ENCODE measurements at regions of chr16 and their contacts with region 1.

Region 1: GRCh38 chr16:56691885-56692284 is 9.6 kb downstream of the MT1X start:
- DNase-seq: peak in 3 of 4 donors; percentile 39 to 80 (median 70)
- ATAC-seq: peak; percentile 97
- H3K4me3 ChIP-seq: no peak overlapping the region
- H3K27ac ChIP-seq: no peak overlapping the region
- H3K4me1 ChIP-seq: no peaks in the 10 kb centered on the region
- H3K27me3 ChIP-seq: no peaks in the 10 kb centered on the region
- CTCF ChIP-seq: no peak

Region 2: GRCh38 chr16:56576585-56577293 is 115.1 kb before region 1 on chr16:
- intact Hi-C with region 1: loop called in 1 of 2 experiments (anchors 10 kb)
- DNase-seq: peak in 3 of 4 donors; percentile 50 to 92 (median 82)
- ATAC-seq: peak; percentile 100
- H3K4me3 ChIP-seq: no peak overlapping the region
- H3K27ac ChIP-seq: no peak overlapping the region
- H3K4me1 ChIP-seq: no peaks in the 10 kb centered on the region
- H3K27me3 ChIP-seq: no peaks in the 10 kb centered on the region
- CTCF ChIP-seq: peak; percentile 52 to 83

Region 3: DNA sequence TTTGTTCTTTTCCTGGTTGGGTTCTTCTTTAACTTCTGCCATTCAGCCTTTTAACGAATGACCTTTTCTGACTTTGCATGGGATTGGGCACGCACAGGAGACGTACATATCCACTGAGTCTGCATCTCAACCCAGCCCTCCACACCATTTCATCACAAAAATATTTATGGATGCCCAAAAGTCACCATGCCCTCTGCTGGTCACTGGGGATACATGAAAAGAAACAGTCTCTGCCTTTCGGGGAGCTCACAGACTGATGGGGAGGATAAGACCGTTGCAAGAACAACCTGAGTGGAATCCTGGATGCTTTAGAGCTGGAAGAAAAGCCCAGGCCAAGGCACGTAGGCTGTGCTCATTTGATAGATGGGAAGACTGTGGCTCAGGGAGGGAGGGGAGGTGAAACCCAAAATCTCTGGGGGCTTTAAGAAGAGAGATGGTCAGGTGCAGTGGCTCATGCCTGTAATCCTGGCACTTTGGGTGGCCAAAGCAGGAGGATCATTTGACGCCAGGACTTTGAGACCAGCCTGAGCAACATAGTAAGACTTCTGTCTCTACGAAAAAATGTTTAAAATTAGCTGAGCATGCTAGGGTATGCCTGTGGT is 91.4 kb before region 1 on chr16:
- intact Hi-C with region 1: no loop called
- DNase-seq: no peak
- ATAC-seq: peak; percentile 70
- H3K4me3 ChIP-seq: no peak overlapping the region
- H3K27ac ChIP-seq: no peak overlapping the region
- H3K4me1 ChIP-seq: peaks cover 0 to 6% of the 10 kb centered on the region in 2 donors
- H3K27me3 ChIP-seq: no peaks in the 10 kb centered on the region
- CTCF ChIP-seq: peak; percentile 37 to 58